CD4-positive, alpha-beta T cell (primary cell): ENCODE measurements at regions of chr5 and their contacts with region 1.

Region 1: DNA sequence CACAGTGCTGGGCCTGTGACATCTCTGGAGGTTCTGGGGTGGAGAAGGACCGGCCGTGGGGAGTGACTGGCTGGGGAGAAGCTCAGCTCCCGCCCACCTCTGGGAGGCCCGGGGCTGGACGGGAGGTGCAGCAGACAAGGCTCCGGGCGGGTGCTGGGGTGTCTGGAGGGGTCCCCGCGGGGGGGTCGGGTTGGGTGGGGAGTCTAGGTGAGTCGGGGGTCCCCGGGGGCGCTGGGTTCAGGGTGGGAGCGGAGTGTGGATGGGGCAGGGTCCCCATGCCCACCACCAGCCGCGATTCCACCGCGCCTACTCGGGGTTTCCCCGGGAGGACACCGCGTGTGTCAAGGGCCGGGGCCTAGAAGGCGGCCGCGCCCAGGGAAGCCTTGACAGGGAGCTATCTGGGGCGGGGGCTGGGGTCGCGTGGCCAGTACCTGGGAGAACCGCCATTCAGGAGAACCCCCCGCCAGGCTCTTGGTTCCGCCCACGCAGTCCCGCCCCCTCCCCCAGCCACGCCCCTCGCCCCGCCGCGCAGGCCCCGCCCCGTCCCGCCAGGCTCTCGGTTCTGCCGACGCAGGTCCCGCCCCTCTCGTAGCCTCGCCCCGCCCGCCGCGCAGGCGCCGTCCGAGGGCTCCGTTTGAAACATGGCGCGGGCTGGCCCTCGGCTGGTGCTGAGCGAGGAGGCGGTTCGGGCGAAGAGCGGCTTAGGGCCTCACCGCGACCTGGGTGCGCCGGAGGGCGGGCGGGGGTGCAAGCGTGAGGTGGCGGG is at the start of gene CEP72:
- DNase-seq: peak; percentile 89 to 97 (median 93)
- ATAC-seq: peak; percentile 95
- H3K4me3 ChIP-seq: peak within 1 kb of the TSS; percentile 90
- H3K4me3 Mint-ChIP-seq: peak within 1 kb of the TSS; percentile 92
- H3K27ac ChIP-seq: no peak within 1 kb of the TSS
- H3K27ac Mint-ChIP-seq: peak within 1 kb of the TSS; percentile 68
- H3K4me1 ChIP-seq: peaks cover 30% of the 10 kb centered on the region
- H3K4me1 Mint-ChIP-seq: peaks cover 53% of the 10 kb centered on the region
- H3K27me3 ChIP-seq: no peaks in the 10 kb centered on the region
- H3K27me3 Mint-ChIP-seq: peaks cover 11% of the 10 kb centered on the region
- CTCF ChIP-seq: no peak
- total RNA-seq, gene CEP72: 7.6 to 8.0 TPM

Region 2: GRCh38 chr5:683551-684481 is 71.9 kb after region 1 on chr5:
- CTCF ChIA-PET with region 1: no interaction called
- POLR2A ChIA-PET with region 1: no interaction called
- intact Hi-C with region 1: no loop called
- DNase-seq: peak in 2 of 14 experiments; percentile 18 to 24
- ATAC-seq: no peak
- H3K4me3 ChIP-seq: no peak overlapping the region
- H3K4me3 Mint-ChIP-seq: no peak overlapping the region
- H3K27ac ChIP-seq: no peak overlapping the region
- H3K27ac Mint-ChIP-seq: no peak overlapping the region
- H3K4me1 ChIP-seq: no peaks in the 10 kb centered on the region
- H3K4me1 Mint-ChIP-seq: no peaks in the 10 kb centered on the region
- H3K27me3 ChIP-seq: no peaks in the 10 kb centered on the region
- H3K27me3 Mint-ChIP-seq: peaks cover 5% of the 10 kb centered on the region
- CTCF ChIP-seq: no peak

Region 3: DNA sequence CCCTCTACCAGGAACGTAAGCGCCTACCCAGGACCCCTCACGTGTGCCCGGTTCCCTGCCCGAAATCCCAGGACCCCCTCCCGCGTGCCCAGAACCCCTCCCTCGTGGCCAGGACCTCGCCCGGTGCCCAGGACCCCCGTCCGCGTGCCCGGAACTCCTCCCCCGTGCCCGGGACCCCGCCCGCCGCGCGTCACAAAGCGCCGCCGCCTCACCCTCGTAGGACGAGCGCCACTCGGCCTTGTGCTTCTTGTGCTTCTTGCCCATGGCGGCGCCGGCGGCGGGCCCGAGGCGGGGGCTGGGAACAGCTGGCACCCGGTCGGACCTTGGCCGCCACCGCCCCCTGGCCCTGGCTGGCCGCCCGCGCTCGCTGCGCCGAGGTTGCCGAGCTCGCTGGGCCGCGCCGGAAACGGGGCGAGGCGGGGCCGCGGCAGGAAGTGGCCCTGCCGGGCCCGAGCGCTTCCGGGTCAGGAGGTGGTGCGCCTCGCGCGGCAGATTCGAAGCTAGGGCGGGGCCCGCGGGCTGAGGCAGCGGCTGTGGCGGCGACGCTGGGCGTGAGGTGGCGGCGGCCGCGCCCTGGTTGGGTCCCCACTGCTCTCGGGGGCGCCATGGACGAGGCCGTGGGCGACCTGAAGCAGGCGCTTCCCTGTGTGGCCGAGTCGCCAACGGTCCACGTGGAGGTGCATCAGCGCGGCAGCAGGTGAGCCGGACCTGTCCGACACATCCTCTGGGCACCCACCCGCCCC is 280.7 kb after region 1 on chr5 and contains the starts of genes BRD9 and TRIP13:
- CTCF ChIA-PET with region 1: no interaction called
- POLR2A ChIA-PET with region 1: no interaction called
- intact Hi-C with region 1: loop called in 1 of 2 experiments (anchors 2 kb)
- DNase-seq: peak; percentile 69 to 93 (median 80)
- ATAC-seq: peak; percentile 95
- H3K4me3 ChIP-seq: peak within 1 kb of the TSS; percentile 95
- H3K4me3 Mint-ChIP-seq: peak within 1 kb of the TSS; percentile 92
- H3K27ac ChIP-seq: peak within 1 kb of the TSS; percentile 48 to 67
- H3K27ac Mint-ChIP-seq: peak within 1 kb of the TSS; percentile 90
- H3K4me1 ChIP-seq: peaks cover 30% of the 10 kb centered on the region
- H3K4me1 Mint-ChIP-seq: peaks cover 25% of the 10 kb centered on the region
- H3K27me3 ChIP-seq: no peaks in the 10 kb centered on the region
- H3K27me3 Mint-ChIP-seq: no peaks in the 10 kb centered on the region
- CTCF ChIP-seq: no peak
- total RNA-seq, gene BRD9: 109 TPM
- total RNA-seq, gene TRIP13: 0.47 to 0.66 TPM

Region 4: GRCh38 chr5:1282131-1282992 is 670.5 kb after region 1 on chr5:
- CTCF ChIA-PET with region 1: no interaction called
- POLR2A ChIA-PET with region 1: no interaction called
- intact Hi-C with region 1: no loop called
- DNase-seq: peak in 2 of 14 experiments; percentile 14
- ATAC-seq: no peak
- H3K4me3 ChIP-seq: no peak overlapping the region
- H3K4me3 Mint-ChIP-seq: no peak overlapping the region
- H3K27ac ChIP-seq: no peak overlapping the region
- H3K27ac Mint-ChIP-seq: no peak overlapping the region
- H3K4me1 ChIP-seq: no peaks in the 10 kb centered on the region
- H3K4me1 Mint-ChIP-seq: no peaks in the 10 kb centered on the region
- H3K27me3 ChIP-seq: no peaks in the 10 kb centered on the region
- H3K27me3 Mint-ChIP-seq: no peaks in the 10 kb centered on the region
- CTCF ChIP-seq: no peak

Region 5: GRCh38 chr5:1792842-1793266 is 1181.0 kb after region 1 on chr5:
- CTCF ChIA-PET with region 1: no interaction called
- POLR2A ChIA-PET with region 1: no interaction called
- intact Hi-C with region 1: loop called in 1 of 2 experiments (anchors 5 kb)
- DNase-seq: peak; percentile 51 to 89 (median 70)
- ATAC-seq: peak; percentile 97
- H3K4me3 ChIP-seq: peak overlapping the region; percentile 34
- H3K4me3 Mint-ChIP-seq: peak overlapping the region; percentile 73
- H3K27ac ChIP-seq: peak overlapping the region; percentile 50 to 55
- H3K27ac Mint-ChIP-seq: peak overlapping the region; percentile 86
- H3K4me1 ChIP-seq: peaks cover 61% of the 10 kb centered on the region
- H3K4me1 Mint-ChIP-seq: peaks cover 53% of the 10 kb centered on the region
- H3K27me3 ChIP-seq: no peaks in the 10 kb centered on the region
- H3K27me3 Mint-ChIP-seq: no peaks in the 10 kb centered on the region
- CTCF ChIP-seq: no peak